ENCODE measurements at regions of chr14 and their contacts with region 1.

Region 1: DNA sequence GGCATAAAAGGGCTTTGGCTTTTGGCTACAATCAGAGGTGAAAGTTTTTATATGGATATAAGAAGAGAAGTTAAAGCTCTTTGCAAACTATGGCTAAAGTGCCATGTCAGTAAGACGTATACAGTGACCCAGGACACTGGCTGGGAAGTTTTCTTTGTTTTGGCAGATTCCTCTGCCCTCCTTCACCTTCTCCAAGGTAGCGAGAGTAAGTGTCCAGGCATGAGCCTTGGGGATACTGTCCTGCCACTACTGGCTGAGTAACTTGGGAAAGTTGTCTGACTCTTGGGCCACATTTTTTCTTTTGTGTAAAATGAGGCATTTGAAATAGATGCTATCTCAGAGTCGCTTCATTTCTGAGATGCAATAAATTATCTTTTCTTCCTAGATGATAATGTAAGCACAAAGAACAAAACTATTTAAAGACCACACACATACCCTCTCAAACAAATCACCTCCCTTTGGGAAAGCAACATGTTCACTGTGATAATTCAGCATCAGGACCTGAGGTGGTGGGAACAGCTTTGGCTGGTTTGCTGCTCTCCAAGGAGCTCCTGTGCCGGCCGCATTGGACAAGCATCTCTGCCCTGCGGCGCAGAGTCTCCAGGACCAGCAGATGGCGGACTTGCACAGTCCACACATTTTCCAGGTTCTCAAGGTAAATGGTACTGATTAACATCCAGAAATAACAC is 106.3 kb downstream of the PTCSC3 start:
- DNase-seq: peak; percentile 44 to 70
- H3K4me3 ChIP-seq: no peak overlapping the region
- H3K27ac ChIP-seq: no peak overlapping the region
- H3K4me1 ChIP-seq: no peaks in the 10 kb centered on the region
- H3K27me3 ChIP-seq: no peaks in the 10 kb centered on the region
- CTCF ChIP-seq: peak; percentile 84 to 92 (median 87)
- EP300 ChIP-seq: no peak
- POLR2A ChIP-seq: no peak
- RAD21 ChIP-seq: peak; percentile 92 to 96

Region 2: DNA sequence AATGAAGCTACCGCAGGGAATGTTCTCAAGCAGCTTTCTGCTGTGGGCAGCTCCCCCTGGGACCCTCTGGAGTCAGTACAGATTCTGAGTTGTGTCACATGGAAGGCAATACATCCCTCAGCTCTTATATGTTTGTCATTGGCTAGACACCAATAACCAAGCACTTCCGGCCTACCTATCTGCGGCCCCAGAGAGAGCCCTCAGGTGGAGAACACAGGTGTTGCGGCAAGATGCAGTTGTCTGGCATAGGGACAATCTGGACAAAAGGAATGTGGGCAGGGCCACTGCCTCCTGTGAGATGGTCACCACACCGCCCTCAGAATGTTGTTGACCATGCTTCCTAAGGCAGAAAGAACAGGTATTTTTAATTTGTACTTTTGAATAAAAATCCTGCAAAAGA is 125.3 kb before region 1 on chr14:
- CTCF ChIA-PET with region 1: interaction called, 17 read pairs
- POLR2A ChIA-PET with region 1: no interaction called
- DNase-seq: peak; percentile 21 to 67
- H3K4me3 ChIP-seq: no peak overlapping the region
- H3K27ac ChIP-seq: no peak overlapping the region
- H3K4me1 ChIP-seq: no peaks in the 10 kb centered on the region
- H3K27me3 ChIP-seq: peaks cover 0 to 5% (median 2%) of the 10 kb centered on the region in 4 experiments; a peak in 1 of 7 replicates
- CTCF ChIP-seq: peak; percentile 67 to 78 (median 75)
- EP300 ChIP-seq: no peak
- POLR2A ChIP-seq: no peak
- RAD21 ChIP-seq: peak; percentile 47 to 61

Region 3: DNA sequence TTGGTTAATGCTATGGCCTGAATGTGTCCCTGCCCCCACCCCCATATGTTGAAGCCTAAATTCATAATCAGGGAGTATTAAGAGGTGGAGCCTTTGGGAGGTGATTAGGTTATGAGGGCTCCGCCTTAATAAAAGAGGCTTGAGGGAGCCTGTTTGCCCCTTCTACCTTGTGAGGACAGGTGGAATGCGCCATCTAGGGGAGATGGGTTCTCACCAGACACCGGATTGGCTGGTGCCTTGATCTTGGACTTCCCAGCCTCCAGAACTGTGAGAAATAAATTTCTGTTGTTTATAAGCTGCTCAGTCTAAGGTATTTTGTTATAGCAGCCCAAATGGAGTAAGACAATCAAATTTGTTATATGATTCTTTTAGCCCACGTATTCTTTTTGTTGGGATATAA is 42.0 kb before region 1 on chr14:
- CTCF ChIA-PET with region 1: interaction called, 16 read pairs
- POLR2A ChIA-PET with region 1: no interaction called
- DNase-seq: no peak
- H3K4me3 ChIP-seq: no peak overlapping the region
- H3K27ac ChIP-seq: no peak overlapping the region
- H3K4me1 ChIP-seq: no peaks in the 10 kb centered on the region
- H3K27me3 ChIP-seq: no peaks in the 10 kb centered on the region
- CTCF ChIP-seq: peak; percentile 48 to 60 (median 60)
- EP300 ChIP-seq: no peak
- POLR2A ChIP-seq: no peak
- RAD21 ChIP-seq: peak; percentile 69 to 72

Region 4: GRCh38 chr14:36091096-36091495 is 20.9 kb after region 1 on chr14:
- CTCF ChIA-PET with region 1: interaction called, 20 read pairs
- POLR2A ChIA-PET with region 1: no interaction called
- DNase-seq: no peak
- H3K4me3 ChIP-seq: no peak overlapping the region
- H3K27ac ChIP-seq: no peak overlapping the region
- H3K4me1 ChIP-seq: no peaks in the 10 kb centered on the region
- H3K27me3 ChIP-seq: peaks cover 0 to 1% (median 0%) of the 10 kb centered on the region in 4 experiments; a peak in 1 of 7 replicates
- CTCF ChIP-seq: no peak
- EP300 ChIP-seq: no peak
- POLR2A ChIP-seq: no peak
- RAD21 ChIP-seq: no peak

Region 5: GRCh38 chr14:36373982-36374673 is 304.0 kb after region 1 on chr14:
- CTCF ChIA-PET with region 1: interaction called, 63 read pairs
- POLR2A ChIA-PET with region 1: no interaction called
- DNase-seq: peak; percentile 57 to 92
- H3K4me3 ChIP-seq: no peak overlapping the region
- H3K27ac ChIP-seq: no peak overlapping the region
- H3K4me1 ChIP-seq: no peaks in the 10 kb centered on the region
- H3K27me3 ChIP-seq: no peaks in the 10 kb centered on the region; a peak in 1 of 7 replicates
- CTCF ChIP-seq: peak; percentile 54 to 98 (median 88)
- EP300 ChIP-seq: no peak
- POLR2A ChIP-seq: no peak
- RAD21 ChIP-seq: peak; percentile 89 to 92

Region 6: GRCh38 chr14:36604757-36605505 is 534.8 kb after region 1 on chr14:
- CTCF ChIA-PET with region 1: interaction called, 24 read pairs
- POLR2A ChIA-PET with region 1: no interaction called
- DNase-seq: peak in 1 of 2 experiments; percentile 70
- H3K4me3 ChIP-seq: peak overlapping the region in 1 of 4 experiments; percentile 40; a peak in 2 of 8 replicates
- H3K27ac ChIP-seq: no peak overlapping the region
- H3K4me1 ChIP-seq: peaks cover 2 to 12% (median 8%) of the 10 kb centered on the region in 4 experiments; a peak in 5 of 7 replicates
- H3K27me3 ChIP-seq: no peaks in the 10 kb centered on the region
- CTCF ChIP-seq: peak in 2 of 3 experiments; percentile 78 to 88; a peak in 3 of 4 replicates
- EP300 ChIP-seq: no peak
- POLR2A ChIP-seq: no peak
- RAD21 ChIP-seq: peak; percentile 90 to 93

Measured in H1 (cell line).